ENCODE measurements at regions of chr3 and their contacts with region 1.

Region 1: DNA sequence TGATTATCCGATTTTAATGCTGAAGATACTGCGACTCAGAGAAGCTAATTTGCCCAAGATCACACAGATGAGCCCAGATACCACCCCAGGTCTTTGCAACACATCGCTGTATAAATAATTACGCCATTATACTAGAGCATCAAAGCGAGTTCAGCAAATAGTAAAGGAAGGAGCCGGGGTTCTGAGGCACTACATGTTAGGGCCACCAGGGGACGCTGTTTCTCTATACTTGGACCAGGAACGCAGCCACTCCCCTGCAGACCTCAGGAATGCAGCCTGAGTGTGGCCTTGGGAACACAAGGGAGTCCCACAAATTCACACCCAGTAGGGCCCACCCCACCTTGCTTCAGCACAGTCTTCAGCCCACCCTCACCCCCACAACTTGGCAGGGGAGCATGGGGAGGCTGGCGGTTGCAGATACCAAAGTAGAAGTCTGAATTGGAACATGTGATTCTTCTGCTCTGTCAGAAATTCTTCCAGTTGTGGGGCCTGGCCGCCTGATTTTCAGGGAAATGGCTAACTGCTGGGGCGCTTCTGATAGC is 57.8 kb upstream of the RYK start:
- DNase-seq: peak; percentile 86
- H3K4me3 Mint-ChIP-seq: no peak overlapping the region
- H3K27ac Mint-ChIP-seq: no peak overlapping the region
- H3K4me1 Mint-ChIP-seq: peaks cover 2% of the 10 kb centered on the region
- H3K27me3 Mint-ChIP-seq: peaks cover 20% of the 10 kb centered on the region

Region 2: DNA sequence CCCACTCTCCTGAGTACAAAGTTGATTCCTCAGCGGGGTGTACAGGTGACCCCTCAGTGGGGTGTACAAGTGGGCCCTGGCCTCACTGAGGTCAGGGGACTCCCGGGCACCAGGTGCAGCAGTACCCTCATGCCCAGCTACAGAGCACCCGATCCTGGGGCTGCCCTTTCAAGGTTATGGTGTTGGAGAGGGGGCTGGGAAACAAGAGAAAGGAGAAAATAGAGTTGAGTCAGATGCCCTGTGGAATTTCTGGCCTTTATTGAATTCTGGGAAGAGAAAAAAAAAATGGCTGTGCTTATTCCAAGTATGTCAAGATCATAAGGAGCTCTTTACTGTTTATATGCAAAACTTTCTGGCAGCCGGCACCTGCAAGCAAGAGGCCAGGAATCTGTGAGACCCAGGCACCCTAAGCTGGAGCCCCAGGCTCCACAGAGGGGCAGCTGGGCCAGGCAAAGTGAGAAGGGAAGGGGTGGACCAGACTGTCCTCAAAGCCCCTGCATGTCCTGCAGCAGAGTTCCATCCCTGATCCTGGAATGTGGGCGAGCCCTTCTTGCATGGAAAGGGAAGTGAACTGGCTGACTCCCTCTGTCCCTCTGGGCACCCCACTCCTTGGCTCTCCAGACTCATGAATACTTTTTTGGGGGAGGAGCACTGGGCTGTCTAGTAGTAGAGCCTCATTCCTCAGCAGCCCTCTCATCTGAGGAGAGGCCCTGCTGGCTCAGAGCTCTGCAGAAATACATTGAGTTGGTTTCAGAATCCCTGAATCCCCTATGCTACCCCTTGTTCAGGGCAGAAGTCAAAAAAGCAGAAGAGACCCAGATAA is 22.8 kb after region 1 on chr3:
- CTCF ChIA-PET with region 1: no interaction called
- intact Hi-C with region 1: no loop called
- DNase-seq: no peak
- H3K4me3 Mint-ChIP-seq: no peak overlapping the region
- H3K27ac Mint-ChIP-seq: no peak overlapping the region
- H3K4me1 Mint-ChIP-seq: no peaks in the 10 kb centered on the region
- H3K27me3 Mint-ChIP-seq: no peaks in the 10 kb centered on the region

Region 3: GRCh38 chr3:134364061-134364935 is 55.9 kb after region 1 on chr3:
- CTCF ChIA-PET with region 1: interaction called, 13 read pairs
- intact Hi-C with region 1: no loop called
- DNase-seq: peak; percentile 62
- H3K4me3 Mint-ChIP-seq: peak overlapping the region; percentile 48
- H3K27ac Mint-ChIP-seq: no peak overlapping the region
- H3K4me1 Mint-ChIP-seq: peaks cover 22% of the 10 kb centered on the region
- H3K27me3 Mint-ChIP-seq: no peaks in the 10 kb centered on the region

Region 4: GRCh38 chr3:134373994-134374790 is 65.8 kb after region 1 on chr3 and contains the start of gene AMOTL2:
- CTCF ChIA-PET with region 1: interaction called, 5 read pairs
- intact Hi-C with region 1: loop called (anchors 1 kb)
- DNase-seq: peak; percentile 31
- H3K4me3 Mint-ChIP-seq: peak within 1 kb of the TSS; percentile 79
- H3K27ac Mint-ChIP-seq: no peak within 1 kb of the TSS
- H3K4me1 Mint-ChIP-seq: peaks cover 14% of the 10 kb centered on the region
- H3K27me3 Mint-ChIP-seq: peaks cover 28% of the 10 kb centered on the region
- total RNA-seq, gene AMOTL2: 0.31 TPM in 1 of 2 experiments, not detected in the other

Region 5: GRCh38 chr3:134449277-134449676 is 140.9 kb after region 1 on chr3:
- CTCF ChIA-PET with region 1: interaction called, 6 read pairs
- intact Hi-C with region 1: loop called (anchors 1 kb)
- DNase-seq: peak; percentile 30
- H3K4me3 Mint-ChIP-seq: no peak overlapping the region
- H3K27ac Mint-ChIP-seq: no peak overlapping the region
- H3K4me1 Mint-ChIP-seq: no peaks in the 10 kb centered on the region
- H3K27me3 Mint-ChIP-seq: peaks cover 22% of the 10 kb centered on the region

Measured in activated naive CD4-positive, alpha-beta T cell treated with anti-CD3 and anti-CD28 coated beads for 36 hours (primary cell).